ENCODE measurements at regions of chr10 and their contacts with region 1.

Region 1: DNA sequence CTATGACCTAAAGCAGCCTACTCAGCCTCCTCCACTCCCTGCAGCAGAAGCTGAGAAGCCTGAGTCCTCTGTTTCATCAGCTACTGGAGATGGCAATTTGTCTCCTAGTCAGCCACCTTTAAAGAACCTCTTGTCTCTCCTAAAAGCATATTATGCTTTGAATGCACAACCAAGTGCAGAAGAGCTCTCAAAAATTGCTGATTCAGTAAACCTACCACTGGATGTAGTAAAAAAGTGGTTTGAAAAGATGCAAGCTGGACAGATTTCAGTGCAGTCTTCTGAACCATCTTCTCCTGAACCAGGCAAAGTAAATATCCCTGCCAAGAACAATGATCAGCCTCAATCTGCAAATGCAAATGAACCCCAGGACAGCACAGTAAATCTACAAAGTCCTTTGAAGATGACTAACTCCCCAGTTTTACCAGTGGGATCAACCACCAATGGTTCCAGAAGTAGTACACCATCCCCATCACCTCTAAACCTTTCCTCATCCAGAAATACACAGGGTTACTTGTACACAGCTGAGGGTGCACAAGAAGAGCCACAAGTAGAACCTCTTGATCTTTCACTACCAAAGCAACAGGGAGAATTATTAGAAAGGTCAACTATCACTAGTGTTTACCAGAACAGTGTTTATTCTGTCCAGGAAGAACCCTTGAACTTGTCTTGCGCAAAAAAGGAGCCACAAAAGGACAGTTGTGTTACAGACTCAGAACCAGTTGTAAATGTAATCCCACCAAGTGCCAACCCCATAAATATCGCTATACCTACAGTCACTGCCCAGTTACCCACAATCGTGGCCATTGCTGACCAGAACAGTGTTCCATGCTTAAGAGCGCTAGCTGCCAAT is 202.2 kb downstream of the ZEB1 start:
- DNase-seq: no peak
- H3K4me3 Mint-ChIP-seq: no peak overlapping the region
- H3K27ac Mint-ChIP-seq: no peak overlapping the region
- H3K4me1 Mint-ChIP-seq: peaks cover 3% of the 10 kb centered on the region
- H3K27me3 Mint-ChIP-seq: no peaks in the 10 kb centered on the region

Region 2: DNA sequence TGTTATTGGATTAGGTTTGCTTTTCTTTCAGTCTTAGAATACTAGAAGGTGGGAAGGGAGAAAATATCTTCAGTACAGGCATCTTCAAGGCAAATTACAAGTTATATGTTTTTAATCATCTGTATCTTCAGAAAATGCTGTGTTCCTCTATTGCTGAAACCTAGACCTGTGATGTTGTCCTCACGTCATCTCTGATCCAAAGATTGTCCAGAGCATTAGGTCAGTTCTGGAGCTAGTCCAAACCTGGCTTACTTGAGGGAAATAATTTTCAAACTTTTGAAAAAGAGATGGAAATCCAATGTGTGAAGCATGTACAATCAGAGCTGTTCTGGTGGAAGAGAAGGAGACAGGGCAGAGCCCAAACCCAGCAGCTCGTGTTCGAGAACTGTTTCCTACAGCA is 15.1 kb after region 1 on chr10:
- CTCF ChIA-PET with region 1: no interaction called
- POLR2A ChIA-PET with region 1: no interaction called
- intact Hi-C with region 1: loop called (anchors 1 kb)
- DNase-seq: no peak
- H3K4me3 Mint-ChIP-seq: no peak overlapping the region
- H3K27ac Mint-ChIP-seq: no peak overlapping the region
- H3K4me1 Mint-ChIP-seq: no peaks in the 10 kb centered on the region
- H3K27me3 Mint-ChIP-seq: peaks cover 2% of the 10 kb centered on the region

Measured in activated CD4-positive, alpha-beta memory T cell treated with anti-CD3 and anti-CD28 coated beads for 36 hours (primary cell).